Activated naive CD4-positive, alpha-beta T cell treated with anti-CD3 and anti-CD28 coated beads for 36 hours (primary cell): ENCODE measurements at regions of chr2 and their contacts with region 1.

Region 1: GRCh38 chr2:233084488-233084887 is 24.3 kb downstream of the INPP5D start:
- DNase-seq: peak; percentile 79
- H3K4me3 Mint-ChIP-seq: peak overlapping the region; percentile 58
- H3K27ac Mint-ChIP-seq: peak overlapping the region; percentile 96
- H3K4me1 Mint-ChIP-seq: peaks cover 80% of the 10 kb centered on the region
- H3K27me3 Mint-ChIP-seq: no peaks in the 10 kb centered on the region

Region 2: DNA sequence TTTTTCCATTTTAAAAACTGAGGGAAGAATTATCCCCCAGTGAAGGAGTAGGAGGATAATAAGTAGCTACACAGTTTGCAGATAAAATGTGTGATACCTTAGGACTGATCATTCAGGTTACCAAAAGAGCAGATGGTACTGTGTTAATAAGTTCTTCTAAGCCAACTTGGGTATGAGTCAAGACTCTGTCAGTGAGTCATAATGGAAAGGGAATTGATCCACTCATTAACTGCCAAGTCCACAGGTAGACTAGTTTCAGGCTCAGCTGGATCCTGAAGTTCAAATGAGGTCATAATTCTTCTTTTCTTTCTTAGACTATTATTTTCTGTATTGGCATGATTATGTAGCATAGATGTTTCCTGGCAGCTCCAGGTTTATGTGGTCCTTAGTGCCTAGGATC is 848.3 kb before region 1 on chr2:
- CTCF ChIA-PET with region 1: no interaction called
- intact Hi-C with region 1: loop called (anchors 5 kb)
- DNase-seq: no peak
- H3K4me3 Mint-ChIP-seq: no peak overlapping the region
- H3K27ac Mint-ChIP-seq: no peak overlapping the region
- H3K4me1 Mint-ChIP-seq: peaks cover 74% of the 10 kb centered on the region
- H3K27me3 Mint-ChIP-seq: no peaks in the 10 kb centered on the region

Region 3: DNA sequence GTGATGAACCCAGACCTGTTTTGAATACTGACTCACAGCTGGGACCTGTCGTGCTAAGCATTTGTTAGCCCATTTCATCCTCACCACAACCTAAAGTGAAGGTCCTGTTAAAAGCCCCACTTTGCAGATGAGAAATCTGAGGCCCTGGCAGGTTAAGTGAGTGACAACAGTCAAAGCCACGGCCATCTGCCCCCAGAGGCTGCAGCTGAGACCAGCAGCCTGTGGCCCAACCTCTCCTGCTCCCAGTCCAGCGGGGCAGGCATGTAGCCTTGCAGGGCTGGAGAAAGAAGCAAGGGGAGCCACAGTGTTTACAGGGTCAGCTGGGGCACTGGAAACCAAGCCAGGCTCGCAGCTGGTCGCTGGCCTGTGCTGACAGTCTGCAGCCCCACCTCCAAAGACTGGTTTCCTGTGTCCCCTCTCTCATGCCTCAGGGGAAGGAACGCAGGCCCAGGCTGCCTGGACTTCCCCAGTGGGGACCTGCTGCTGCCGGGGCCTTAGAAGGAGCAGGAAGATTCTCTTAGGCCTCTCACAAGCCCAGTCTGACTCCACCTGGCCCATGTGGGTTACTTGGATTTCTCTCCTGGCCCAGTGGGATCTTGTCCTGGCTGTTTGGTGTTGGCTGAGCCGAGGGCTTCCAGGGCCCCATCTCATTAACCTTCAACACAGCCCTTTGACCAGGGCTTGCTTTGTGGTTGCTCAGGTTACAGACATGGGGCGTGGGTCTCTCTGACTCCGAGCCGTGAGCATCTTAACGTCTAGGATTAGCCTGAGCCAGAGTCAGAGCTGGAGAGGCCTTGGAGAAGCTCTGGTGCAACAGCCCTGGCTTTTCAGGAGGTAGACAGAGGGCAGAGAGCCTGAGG is 22.7 kb before region 1 on chr2:
- CTCF ChIA-PET with region 1: interaction called, 41 read pairs
- intact Hi-C with region 1: loop called (anchors 1 kb)
- DNase-seq: peak; percentile 76
- H3K4me3 Mint-ChIP-seq: peak overlapping the region; percentile 98
- H3K27ac Mint-ChIP-seq: peak overlapping the region; percentile 98
- H3K4me1 Mint-ChIP-seq: peaks cover 40% of the 10 kb centered on the region
- H3K27me3 Mint-ChIP-seq: no peaks in the 10 kb centered on the region

Region 4: DNA sequence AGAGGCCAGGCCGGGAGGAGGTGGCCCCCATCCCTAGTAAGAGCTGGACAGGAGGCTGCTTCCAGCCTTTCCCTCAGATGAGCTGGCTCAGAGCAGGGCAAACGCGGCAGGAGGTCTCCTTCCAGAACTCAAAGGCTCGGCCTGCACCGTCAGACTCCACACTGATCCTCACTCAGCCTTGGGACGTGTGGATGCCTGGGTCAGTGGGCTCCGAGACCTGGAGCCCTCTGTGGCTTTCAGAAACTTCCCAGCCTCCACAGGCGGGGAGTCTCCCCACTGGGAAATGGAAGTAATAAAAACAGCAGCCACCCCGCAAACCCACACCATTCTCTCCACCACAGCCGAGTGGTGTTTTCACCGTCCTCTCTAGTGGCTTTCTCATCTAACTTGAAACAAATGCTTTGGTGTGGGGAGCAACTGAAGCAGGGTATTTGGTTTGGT is 30.0 kb after region 1 on chr2:
- CTCF ChIA-PET with region 1: interaction called, 4 read pairs
- intact Hi-C with region 1: loop called (anchors 2 kb)
- DNase-seq: peak; percentile 13
- H3K4me3 Mint-ChIP-seq: no peak overlapping the region
- H3K27ac Mint-ChIP-seq: peak overlapping the region; percentile 46
- H3K4me1 Mint-ChIP-seq: peaks cover 65% of the 10 kb centered on the region
- H3K27me3 Mint-ChIP-seq: no peaks in the 10 kb centered on the region

Region 5: DNA sequence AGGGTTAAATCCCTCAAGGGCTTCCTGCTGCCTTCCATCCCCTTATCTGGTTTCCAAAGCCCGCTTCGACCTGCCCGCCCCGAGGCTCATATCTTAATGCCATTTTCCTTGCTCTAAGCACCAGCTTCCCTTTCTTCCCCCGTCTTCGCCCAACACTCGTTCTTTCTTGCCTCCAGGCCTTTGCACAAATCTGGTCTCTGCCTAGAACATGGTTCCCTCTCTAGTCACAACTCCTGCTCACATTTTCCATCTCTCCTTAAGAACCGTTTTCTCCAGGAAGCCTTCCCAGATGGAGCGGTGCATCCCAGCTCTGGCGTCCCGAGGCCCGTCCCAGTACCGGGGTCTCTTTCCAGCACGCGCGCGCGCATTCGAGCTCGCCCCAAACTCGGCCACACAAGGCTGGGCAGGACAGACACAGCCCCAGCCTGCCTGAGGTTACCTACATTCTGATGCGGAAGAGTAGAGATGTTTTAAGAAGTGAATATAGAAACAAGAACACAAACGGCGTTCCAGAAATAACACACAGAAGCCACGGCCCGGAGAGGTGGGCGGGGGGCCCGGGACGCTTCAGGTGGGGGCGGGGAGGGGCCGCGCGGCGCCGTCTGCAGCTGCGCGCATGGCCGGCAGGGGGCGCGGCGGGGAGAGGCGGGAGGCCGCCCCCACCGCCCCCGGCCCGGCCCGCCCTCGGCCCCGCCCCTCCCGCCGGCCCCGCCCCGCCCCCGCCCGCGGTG is 269.4 kb after region 1 on chr2 and contains the start of gene DGKD:
- CTCF ChIA-PET with region 1: no interaction called
- intact Hi-C with region 1: loop called (anchors 5 kb)
- DNase-seq: peak; percentile 71
- H3K4me3 Mint-ChIP-seq: peak within 1 kb of the TSS; percentile 87
- H3K27ac Mint-ChIP-seq: peak within 1 kb of the TSS; percentile 70
- H3K4me1 Mint-ChIP-seq: peaks cover 63% of the 10 kb centered on the region
- H3K27me3 Mint-ChIP-seq: no peaks in the 10 kb centered on the region
- total RNA-seq, gene DGKD: 68.9 to 72.3 TPM

Region 6: DNA sequence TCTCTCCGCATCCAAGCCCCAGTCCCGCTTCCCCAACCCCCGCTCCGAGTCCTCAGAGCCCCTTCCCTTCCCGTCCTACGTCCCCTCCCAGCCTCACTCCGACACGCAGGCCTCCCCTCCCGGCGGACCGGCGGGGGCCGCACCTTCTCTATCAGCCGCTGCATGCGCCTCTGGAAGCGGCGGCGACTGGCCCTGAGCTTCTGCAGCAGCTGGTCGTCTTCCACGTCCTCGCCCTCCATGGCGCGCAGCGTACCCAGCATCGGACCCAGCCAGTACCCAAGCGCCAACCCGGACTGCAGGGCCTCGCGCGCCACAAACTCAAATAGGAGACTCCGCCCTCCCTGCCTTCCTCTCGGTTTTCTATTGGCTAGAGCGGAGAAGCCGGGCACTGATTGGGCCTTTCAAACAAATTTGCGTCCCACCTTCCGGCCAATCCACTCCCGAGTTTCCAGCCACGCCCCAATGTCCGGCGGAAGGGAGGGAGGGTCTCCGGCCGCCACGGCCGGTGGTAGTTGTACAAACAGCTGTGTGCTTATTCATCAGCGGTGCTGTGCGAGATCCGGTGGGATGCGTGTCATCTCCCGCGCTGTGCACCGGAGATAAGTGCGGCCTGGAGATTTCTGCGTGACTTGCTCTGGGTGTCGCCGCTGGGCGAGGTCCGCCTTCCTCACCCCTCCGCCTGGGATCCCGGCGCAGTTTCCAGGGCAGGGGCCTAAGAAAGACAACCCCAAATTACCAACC is 769.9 kb after region 1 on chr2 and contains the start of gene HJURP:
- CTCF ChIA-PET with region 1: no interaction called
- intact Hi-C with region 1: loop called (anchors 10 kb)
- DNase-seq: peak; percentile 98
- H3K4me3 Mint-ChIP-seq: peak within 1 kb of the TSS; percentile 93
- H3K27ac Mint-ChIP-seq: peak within 1 kb of the TSS; percentile 95
- H3K4me1 Mint-ChIP-seq: peaks cover 17% of the 10 kb centered on the region
- H3K27me3 Mint-ChIP-seq: peaks cover 7% of the 10 kb centered on the region
- total RNA-seq, gene HJURP: 127 to 129 TPM